ENCODE measurements at regions of chr5 and their contacts with region 1.

Region 1: GRCh38 chr5:124289641-124290311 is 456.7 kb downstream of the ZNF608 start:
- DNase-seq: peak; percentile 91
- ATAC-seq: peak; percentile 96
- H3K4me3 ChIP-seq: no peak overlapping the region; a peak in 1 of 6 replicates
- H3K27ac ChIP-seq: peak overlapping the region; percentile 42
- H3K4me1 ChIP-seq: peaks cover 41% of the 10 kb centered on the region
- H3K27me3 ChIP-seq: no peaks in the 10 kb centered on the region
- CTCF ChIP-seq: peak; percentile 57
- EP300 ChIP-seq: peak in 1 of 2 experiments; percentile 83; a peak in 2 of 4 replicates
- POLR2A ChIP-seq: no peak
- RAD21 ChIP-seq: no peak

Region 2: DNA sequence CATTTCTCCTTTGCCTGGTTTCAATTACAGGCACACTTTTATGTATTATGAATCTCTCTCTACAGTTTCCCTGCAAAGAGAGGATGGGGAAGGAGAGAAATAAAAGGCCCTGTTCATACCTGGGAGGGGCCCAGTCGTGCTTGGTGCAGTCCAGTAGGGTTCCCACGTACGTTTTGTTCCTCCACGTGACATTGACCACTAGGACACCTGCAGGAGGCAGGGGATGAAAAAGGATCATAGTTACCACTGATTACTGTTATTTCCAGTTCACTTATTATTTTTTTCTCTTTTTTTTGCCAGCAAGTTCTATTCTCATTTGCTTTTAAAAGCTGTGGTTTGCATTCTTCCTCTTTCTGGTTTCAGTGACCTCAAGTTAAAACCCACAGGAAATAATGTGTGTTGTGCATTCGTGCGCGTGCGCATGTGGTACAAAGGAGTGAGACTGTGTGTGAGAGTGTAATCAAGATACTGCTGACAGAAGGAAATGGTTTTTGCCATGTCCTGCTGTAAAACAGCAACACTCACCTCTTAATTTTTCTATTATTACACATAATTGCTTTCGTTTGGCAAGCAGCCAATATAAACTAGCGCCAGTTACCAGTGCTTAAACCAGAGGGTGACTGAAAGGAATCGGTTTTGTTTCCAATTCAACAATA is 359.8 kb after region 1 on chr5:
- CTCF ChIA-PET with region 1: no interaction called
- POLR2A ChIA-PET with region 1: no interaction called
- in situ Hi-C with region 1: loop called (anchors 25 kb)
- intact Hi-C with region 1: no loop called
- DNase-seq: no peak
- ATAC-seq: no peak
- H3K4me3 ChIP-seq: no peak overlapping the region
- H3K27ac ChIP-seq: no peak overlapping the region
- H3K4me1 ChIP-seq: peaks cover 80% of the 10 kb centered on the region
- H3K27me3 ChIP-seq: no peaks in the 10 kb centered on the region
- CTCF ChIP-seq: no peak
- EP300 ChIP-seq: no peak
- POLR2A ChIP-seq: no peak
- RAD21 ChIP-seq: no peak